GM12878 (cell line): ENCODE measurements at regions of chr4 and their contacts with region 1.

Region 1: DNA sequence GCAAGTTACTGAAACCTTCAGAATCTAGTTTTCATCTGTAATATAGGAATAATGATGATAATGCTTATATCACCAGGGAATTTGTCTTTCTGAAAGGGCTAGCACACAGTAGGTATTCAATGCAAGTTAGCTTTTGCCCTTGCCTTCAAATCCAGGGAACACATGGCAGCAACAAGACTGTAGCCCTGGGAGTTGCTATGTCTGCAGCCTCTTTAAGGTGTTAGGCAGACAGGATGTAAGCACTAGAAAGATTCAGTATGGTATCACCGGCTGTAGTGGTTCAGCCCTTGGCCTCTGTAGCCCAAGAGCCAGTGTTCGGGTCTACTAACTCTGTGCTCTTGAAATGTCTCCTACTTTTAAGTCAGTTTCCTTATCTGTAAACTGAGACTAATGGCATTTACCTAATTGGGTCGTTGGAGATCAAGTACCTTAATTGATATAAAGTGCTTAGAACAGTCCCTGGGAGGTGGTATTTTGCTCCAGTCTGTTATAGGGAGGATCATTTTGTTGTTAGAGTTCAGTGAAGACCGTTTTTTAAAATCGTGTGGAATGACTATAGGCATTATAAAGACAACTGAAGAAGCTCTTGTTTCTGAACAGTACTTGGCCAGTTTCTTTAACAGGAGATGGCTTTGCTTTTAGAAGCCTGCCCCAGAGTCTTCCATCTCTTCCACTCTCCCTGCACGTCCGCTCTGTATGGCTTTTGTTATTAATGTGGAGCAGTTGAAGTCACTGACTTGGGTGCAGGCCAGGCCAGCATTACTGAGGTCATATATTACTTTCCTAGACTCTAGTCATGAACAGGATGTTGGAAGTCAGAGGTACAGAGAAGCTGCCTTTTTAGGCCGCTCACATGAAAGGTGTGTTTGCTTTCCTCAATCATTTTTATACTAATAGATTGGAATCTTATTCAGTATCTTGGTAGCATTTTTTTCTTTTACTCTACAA is 44.8 kb downstream of the GAB1 start:
- DNase-seq: no peak
- ATAC-seq: peak; percentile 67
- H3K4me3 ChIP-seq: no peak overlapping the region
- H3K27ac ChIP-seq: no peak overlapping the region
- H3K4me1 ChIP-seq: peaks cover 33% of the 10 kb centered on the region
- H3K27me3 ChIP-seq: no peaks in the 10 kb centered on the region
- CTCF ChIP-seq: no peak
- EP300 ChIP-seq: no peak
- POLR2A ChIP-seq: no peak
- RAD21 ChIP-seq: no peak

Region 2: GRCh38 chr4:143300860-143301259 is 80.6 kb before region 1 on chr4:
- CTCF ChIA-PET with region 1: no interaction called
- POLR2A ChIA-PET with region 1: no interaction called
- RAD21 ChIA-PET with region 1: no interaction called
- SMC1A ChIA-PET with region 1: no interaction called
- in situ Hi-C with region 1: no loop called
- intact Hi-C with region 1: no loop called
- DNase-seq: no peak
- ATAC-seq: no peak
- H3K4me3 ChIP-seq: no peak overlapping the region
- H3K27ac ChIP-seq: no peak overlapping the region
- H3K4me1 ChIP-seq: no peaks in the 10 kb centered on the region
- H3K27me3 ChIP-seq: no peaks in the 10 kb centered on the region
- CTCF ChIP-seq: no peak
- EP300 ChIP-seq: no peak
- POLR2A ChIP-seq: no peak
- RAD21 ChIP-seq: no peak

Region 3: GRCh38 chr4:143399113-143399949 is 17.9 kb after region 1 on chr4:
- CTCF ChIA-PET with region 1: interaction called, 85 read pairs
- POLR2A ChIA-PET with region 1: interaction called, 17 read pairs
- RAD21 ChIA-PET with region 1: interaction called, 87 read pairs
- SMC1A ChIA-PET with region 1: interaction called, 204 read pairs
- in situ Hi-C with region 1: no loop called
- intact Hi-C with region 1: loop called (anchors 2 kb)
- DNase-seq: no peak
- ATAC-seq: peak; percentile 76
- H3K4me3 ChIP-seq: no peak overlapping the region
- H3K27ac ChIP-seq: no peak overlapping the region
- H3K4me1 ChIP-seq: peaks cover 19% of the 10 kb centered on the region
- H3K27me3 ChIP-seq: no peaks in the 10 kb centered on the region; a peak in 1 of 4 replicates
- CTCF ChIP-seq: peak; percentile 62 to 69 (median 62)
- EP300 ChIP-seq: no peak
- POLR2A ChIP-seq: no peak
- RAD21 ChIP-seq: peak; percentile 72